ENCODE measurements at regions of chr17 and their contacts with region 1.

Region 1: GRCh38 chr17:74776044-74776977 is at the start of gene NAT9:
- DNase-seq: peak; percentile 99
- ATAC-seq: peak; percentile 97
- total RNA-seq, gene NAT9: 19.4 TPM

Region 2: GRCh38 chr17:74842599-74843351 is 66.5 kb after region 1 on chr17:
- intact Hi-C with region 1: no loop called
- DNase-seq: peak; percentile 91
- ATAC-seq: peak; percentile 75

Region 3: GRCh38 chr17:74873038-74873873 is 96.9 kb after region 1 on chr17:
- intact Hi-C with region 1: loop called (anchors 5 kb)
- DNase-seq: peak; percentile 100
- ATAC-seq: peak; percentile 95

Measured in Right ventricle myocardium inferior (tissue), 1 donor.